Activated CD4-positive, alpha-beta memory T cell treated with anti-CD3 and anti-CD28 coated beads, Interleukin-2, amount 10 ng/mL, durations not matched to agents 7 days and 5 days (primary cell): ENCODE measurements at regions of chr17 and their contacts with region 1.

Region 1: GRCh38 chr17:4161179-4161559 is 18.2 kb downstream of the CYB5D2 start:
- DNase-seq: no peak
- H3K4me3 Mint-ChIP-seq: no peak overlapping the region
- H3K27ac Mint-ChIP-seq: peak overlapping the region; percentile 69
- H3K4me1 Mint-ChIP-seq: peaks cover 28% of the 10 kb centered on the region
- H3K27me3 Mint-ChIP-seq: no peaks in the 10 kb centered on the region

Region 2: DNA sequence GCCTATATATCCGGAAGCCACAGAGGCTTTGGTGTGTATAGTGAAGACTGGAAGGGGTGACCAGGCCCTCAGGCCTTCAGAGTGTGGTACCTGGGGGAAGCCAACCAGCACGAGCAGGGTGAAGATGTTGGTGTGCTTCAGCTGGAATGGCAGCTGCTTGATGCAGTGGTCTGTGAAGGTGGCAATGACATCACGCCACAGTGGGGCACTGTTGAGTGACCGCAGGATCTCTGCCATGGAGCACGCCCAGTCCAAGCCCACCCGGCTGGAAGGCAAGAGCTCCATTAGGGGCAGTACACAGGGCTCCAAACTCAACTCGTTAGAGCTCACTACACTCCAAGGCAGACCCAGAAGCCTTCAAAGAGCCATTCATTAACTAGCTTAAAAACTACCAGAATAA is 128.4 kb before region 1 on chr17:
- CTCF ChIA-PET with region 1: no interaction called
- POLR2A ChIA-PET with region 1: no interaction called
- DNase-seq: no peak
- H3K4me3 Mint-ChIP-seq: no peak overlapping the region
- H3K27ac Mint-ChIP-seq: no peak overlapping the region
- H3K4me1 Mint-ChIP-seq: peaks cover 5% of the 10 kb centered on the region
- H3K27me3 Mint-ChIP-seq: no peaks in the 10 kb centered on the region

Region 3: GRCh38 chr17:4175921-4176807 is 15.0 kb after region 1 on chr17:
- CTCF ChIA-PET with region 1: interaction called, 7 read pairs
- POLR2A ChIA-PET with region 1: interaction called, 22 read pairs
- DNase-seq: peak; percentile 58
- H3K4me3 Mint-ChIP-seq: peak overlapping the region; percentile 70
- H3K27ac Mint-ChIP-seq: peak overlapping the region; percentile 100
- H3K4me1 Mint-ChIP-seq: peaks cover 50% of the 10 kb centered on the region
- H3K27me3 Mint-ChIP-seq: no peaks in the 10 kb centered on the region

Region 4: GRCh38 chr17:4189280-4189679 is 28.1 kb after region 1 on chr17:
- CTCF ChIA-PET with region 1: no interaction called
- POLR2A ChIA-PET with region 1: no interaction called
- DNase-seq: no peak
- H3K4me3 Mint-ChIP-seq: no peak overlapping the region
- H3K27ac Mint-ChIP-seq: peak overlapping the region; percentile 55
- H3K4me1 Mint-ChIP-seq: peaks cover 11% of the 10 kb centered on the region
- H3K27me3 Mint-ChIP-seq: no peaks in the 10 kb centered on the region

Region 5: GRCh38 chr17:4354862-4355514 is 193.8 kb after region 1 on chr17:
- CTCF ChIA-PET with region 1: no interaction called
- POLR2A ChIA-PET with region 1: no interaction called
- DNase-seq: no peak
- H3K4me3 Mint-ChIP-seq: no peak overlapping the region
- H3K27ac Mint-ChIP-seq: no peak overlapping the region
- H3K4me1 Mint-ChIP-seq: peaks cover 22% of the 10 kb centered on the region
- H3K27me3 Mint-ChIP-seq: no peaks in the 10 kb centered on the region